ENCODE measurements at regions of chr11 and their contacts with region 1.

Region 1: GRCh38 chr11:30346068-30346688 is 23.3 kb downstream of the ARL14EP start:
- DNase-seq: no peak
- H3K4me3 ChIP-seq: no peak overlapping the region
- H3K27ac ChIP-seq: no peak overlapping the region
- H3K4me1 ChIP-seq: no peaks in the 10 kb centered on the region
- H3K27me3 ChIP-seq: no peaks in the 10 kb centered on the region
- CTCF ChIP-seq: peak; percentile 13 to 45 (median 37)
- EP300 ChIP-seq: no peak
- POLR2A ChIP-seq: no peak

Region 2: DNA sequence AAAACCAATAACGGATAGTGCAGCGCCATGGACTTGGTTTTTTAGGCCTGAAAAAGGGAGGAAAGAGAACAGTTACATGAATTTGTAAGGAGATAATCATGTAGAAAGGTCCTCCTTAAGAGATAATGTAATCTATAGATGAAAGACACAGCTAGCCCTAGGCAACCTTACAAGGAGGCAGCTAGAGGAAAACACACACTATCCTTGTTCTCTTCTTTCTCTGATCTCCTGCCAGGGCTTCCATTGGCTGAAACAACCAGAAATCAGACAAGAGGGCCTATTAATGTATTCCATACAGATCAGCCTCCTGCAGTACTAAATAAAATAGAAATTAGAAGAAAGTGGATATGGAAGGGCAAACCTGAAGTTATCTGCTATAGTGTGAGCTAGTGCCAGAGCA is 382.4 kb before region 1 on chr11:
- intact Hi-C with region 1: no loop called
- DNase-seq: no peak
- H3K4me3 ChIP-seq: no peak overlapping the region
- H3K27ac ChIP-seq: no peak overlapping the region
- H3K4me1 ChIP-seq: no peaks in the 10 kb centered on the region
- H3K27me3 ChIP-seq: no peaks in the 10 kb centered on the region
- CTCF ChIP-seq: no peak
- EP300 ChIP-seq: no peak
- POLR2A ChIP-seq: no peak

Region 3: GRCh38 chr11:30653606-30654005 is 307.4 kb after region 1 on chr11:
- intact Hi-C with region 1: loop called (anchors 1 kb)
- DNase-seq: no peak
- H3K4me3 ChIP-seq: no peak overlapping the region
- H3K27ac ChIP-seq: no peak overlapping the region
- H3K4me1 ChIP-seq: no peaks in the 10 kb centered on the region
- H3K27me3 ChIP-seq: no peaks in the 10 kb centered on the region
- CTCF ChIP-seq: no peak
- EP300 ChIP-seq: no peak
- POLR2A ChIP-seq: no peak

Region 4: GRCh38 chr11:30855383-30856006 is 509.3 kb after region 1 on chr11:
- intact Hi-C with region 1: loop called (anchors 1 kb)
- DNase-seq: no peak
- H3K4me3 ChIP-seq: no peak overlapping the region
- H3K27ac ChIP-seq: no peak overlapping the region
- H3K4me1 ChIP-seq: no peaks in the 10 kb centered on the region
- H3K27me3 ChIP-seq: no peaks in the 10 kb centered on the region
- CTCF ChIP-seq: peak in 3 of 4 experiments; percentile 12 to 52 (median 17)
- EP300 ChIP-seq: no peak
- POLR2A ChIP-seq: no peak

Region 5: GRCh38 chr11:30917859-30918478 is 571.8 kb after region 1 on chr11:
- intact Hi-C with region 1: loop called (anchors 5 kb)
- DNase-seq: no peak
- H3K4me3 ChIP-seq: no peak overlapping the region
- H3K27ac ChIP-seq: no peak overlapping the region
- H3K4me1 ChIP-seq: peaks cover 0 to 3% (median 0%) of the 10 kb centered on the region in 4 donors
- H3K27me3 ChIP-seq: no peaks in the 10 kb centered on the region
- CTCF ChIP-seq: peak; percentile 13 to 63 (median 39)
- EP300 ChIP-seq: no peak
- POLR2A ChIP-seq: no peak

Measured in sigmoid colon (tissue), 7 donors.